ENCODE measurements at regions of chr11 and their contacts with region 1.

Region 1: GRCh38 chr11:12642040-12642439 is 32.2 kb upstream of the TEAD1 start:
- DNase-seq: no peak
- ATAC-seq: no peak
- H3K4me3 ChIP-seq: no peak overlapping the region
- H3K27ac ChIP-seq: no peak overlapping the region
- H3K4me1 ChIP-seq: no peaks in the 10 kb centered on the region
- H3K27me3 ChIP-seq: no peaks in the 10 kb centered on the region
- CTCF ChIP-seq: no peak
- POLR2A ChIP-seq: no peak

Region 2: DNA sequence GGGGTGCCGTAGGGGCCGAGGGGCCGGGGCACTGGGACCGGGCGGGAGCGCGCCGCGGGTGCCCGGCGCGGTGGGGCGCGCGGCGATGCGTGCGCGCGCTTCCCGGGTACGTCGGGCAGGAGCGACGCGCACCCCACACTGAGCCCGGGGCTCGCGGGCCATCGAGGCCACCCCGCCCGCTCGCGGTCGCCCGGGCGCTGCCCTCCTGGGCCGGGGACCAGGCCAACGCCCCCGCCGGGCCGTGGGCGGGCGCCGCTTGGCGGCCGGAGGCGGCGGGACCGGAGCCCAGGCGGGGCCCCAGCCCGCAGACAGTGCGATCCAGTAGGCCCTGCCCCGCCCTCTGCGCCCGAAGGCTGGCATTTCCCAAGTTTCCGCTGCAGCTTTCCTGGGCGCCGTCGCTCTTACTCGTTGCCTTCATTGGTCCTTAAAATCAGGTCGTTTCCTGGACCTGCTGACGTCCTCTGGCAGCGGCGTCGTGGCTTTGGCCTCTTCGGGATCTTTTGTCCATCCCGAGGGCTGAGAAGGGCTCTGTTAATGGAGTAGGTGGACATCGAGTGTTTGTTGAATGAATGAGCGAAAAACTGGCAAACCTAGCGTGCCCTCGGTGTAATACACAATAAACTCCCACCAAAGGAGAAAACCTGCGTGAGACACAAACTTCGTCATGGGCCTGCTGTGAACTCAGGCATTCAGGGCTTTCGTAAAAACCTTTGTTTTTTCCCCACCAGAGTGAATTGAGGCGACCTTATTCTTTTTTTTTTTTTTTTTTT is 264.0 kb before region 1 on chr11:
- in situ Hi-C with region 1: no loop called
- intact Hi-C with region 1: no loop called
- DNase-seq: peak; percentile 21 to 43
- ATAC-seq: peak; percentile 58 to 63
- H3K4me3 ChIP-seq: peak overlapping the region; percentile 57 to 75 (median 66)
- H3K27ac ChIP-seq: peak overlapping the region; percentile 71 to 85 (median 76)
- H3K4me1 ChIP-seq: peaks cover 5 to 15% of the 10 kb centered on the region in 2 donors
- H3K27me3 ChIP-seq: no peaks in the 10 kb centered on the region
- CTCF ChIP-seq: peak in 2 of 5 experiments; percentile 17 to 30
- POLR2A ChIP-seq: peak; percentile 22 to 50

Region 3: DNA sequence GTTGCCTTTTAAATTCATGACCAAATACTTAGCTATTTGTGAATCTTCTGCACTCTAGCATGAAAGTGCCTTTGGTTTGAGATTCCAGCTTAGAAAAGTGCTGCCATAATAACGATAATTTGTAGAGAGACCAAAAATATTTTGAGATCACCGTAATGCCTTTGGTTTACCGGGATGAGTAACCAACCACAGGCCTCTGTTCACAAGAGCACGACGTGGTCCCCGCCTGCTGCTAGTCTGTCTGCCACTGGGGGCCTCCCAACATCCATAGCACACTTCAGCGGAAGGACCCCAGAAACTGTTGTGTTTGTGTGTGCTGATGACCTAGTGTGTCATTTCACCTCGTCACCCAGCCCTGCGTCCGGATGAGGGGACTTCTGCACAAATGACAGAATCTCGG is 300.1 kb after region 1 on chr11:
- in situ Hi-C with region 1: no loop called
- intact Hi-C with region 1: no loop called
- DNase-seq: no peak
- ATAC-seq: no peak
- H3K4me3 ChIP-seq: no peak overlapping the region
- H3K27ac ChIP-seq: no peak overlapping the region
- H3K4me1 ChIP-seq: no peaks in the 10 kb centered on the region
- H3K27me3 ChIP-seq: no peaks in the 10 kb centered on the region
- CTCF ChIP-seq: no peak
- POLR2A ChIP-seq: no peak

Region 4: GRCh38 chr11:13152736-13153533 is 510.9 kb after region 1 on chr11:
- in situ Hi-C with region 1: loop called in 1 of 4 experiments (anchors 25 kb)
- intact Hi-C with region 1: no loop called
- DNase-seq: no peak
- ATAC-seq: no peak
- H3K4me3 ChIP-seq: no peak overlapping the region
- H3K27ac ChIP-seq: no peak overlapping the region
- H3K4me1 ChIP-seq: no peaks in the 10 kb centered on the region
- H3K27me3 ChIP-seq: no peaks in the 10 kb centered on the region
- CTCF ChIP-seq: peak in 2 of 5 experiments; percentile 17 to 30
- POLR2A ChIP-seq: no peak

Measured in gastrocnemius medialis (tissue), 4 donors.